ENCODE measurements at regions of chr11 and their contacts with region 1.

Region 1: DNA sequence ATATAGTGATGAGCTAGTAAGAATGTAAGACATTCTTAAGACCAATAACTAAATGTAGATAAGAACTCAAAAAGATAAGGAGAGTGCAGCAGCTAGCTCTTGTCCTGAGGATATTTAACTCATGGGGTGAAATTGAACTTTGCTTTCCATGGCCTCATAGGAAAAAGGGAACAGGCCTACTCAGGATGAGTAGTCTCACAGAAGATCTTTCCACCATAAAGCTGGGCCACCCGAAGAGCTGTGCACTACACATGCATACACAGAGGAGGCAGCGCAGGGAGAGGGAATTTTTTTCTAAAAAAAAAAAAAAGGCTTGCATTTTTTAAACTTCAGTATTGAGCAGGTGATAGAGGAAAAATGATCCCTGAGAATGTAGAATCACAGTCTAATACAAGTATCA is 59.9 kb upstream of the CFAP300 start:
- ATAC-seq: no peak
- H3K4me3 ChIP-seq: no peak overlapping the region
- H3K27ac ChIP-seq: no peak overlapping the region
- H3K4me1 ChIP-seq: no peaks in the 10 kb centered on the region

Region 2: DNA sequence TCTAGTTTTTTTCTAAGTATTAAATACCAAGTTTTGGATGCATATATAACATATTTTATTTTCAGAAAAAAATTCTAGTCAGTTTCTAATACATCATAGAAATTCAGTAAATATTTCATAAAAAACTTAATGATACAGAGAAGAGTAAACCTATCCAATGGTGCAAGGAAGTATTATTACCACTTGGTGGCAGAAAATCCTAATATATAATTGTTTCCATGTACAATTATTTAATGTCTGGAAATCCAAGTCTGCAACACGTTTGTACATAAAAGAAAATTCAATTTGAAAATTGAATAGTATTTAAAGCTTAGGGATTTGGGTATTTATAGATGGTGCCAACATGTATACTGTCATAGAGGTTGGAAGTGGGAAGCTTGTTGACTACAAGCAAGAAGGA is 530.6 kb before region 1 on chr11:
- in situ Hi-C with region 1: loop called in 1 of 9 experiments (anchors 25 kb)
- ATAC-seq: peak in 3 of 8 experiments; percentile 45 to 72 (median 59)
- H3K4me3 ChIP-seq: no peak overlapping the region
- H3K27ac ChIP-seq: no peak overlapping the region
- H3K4me1 ChIP-seq: no peaks in the 10 kb centered on the region

Region 3: GRCh38 chr11:102144357-102145342 is 157.3 kb after region 1 on chr11:
- in situ Hi-C with region 1: no loop called
- ATAC-seq: peak in 4 of 8 experiments; percentile 25 to 89 (median 82)
- H3K4me3 ChIP-seq: no peak overlapping the region
- H3K27ac ChIP-seq: no peak overlapping the region
- H3K4me1 ChIP-seq: peaks cover 13 to 20% of the 10 kb centered on the region in 2 donors

Measured in motor neuron (in vitro differentiated cells).